K562 (cell line): ENCODE measurements at regions of chr1 and their contacts with region 1.

Region 1: DNA sequence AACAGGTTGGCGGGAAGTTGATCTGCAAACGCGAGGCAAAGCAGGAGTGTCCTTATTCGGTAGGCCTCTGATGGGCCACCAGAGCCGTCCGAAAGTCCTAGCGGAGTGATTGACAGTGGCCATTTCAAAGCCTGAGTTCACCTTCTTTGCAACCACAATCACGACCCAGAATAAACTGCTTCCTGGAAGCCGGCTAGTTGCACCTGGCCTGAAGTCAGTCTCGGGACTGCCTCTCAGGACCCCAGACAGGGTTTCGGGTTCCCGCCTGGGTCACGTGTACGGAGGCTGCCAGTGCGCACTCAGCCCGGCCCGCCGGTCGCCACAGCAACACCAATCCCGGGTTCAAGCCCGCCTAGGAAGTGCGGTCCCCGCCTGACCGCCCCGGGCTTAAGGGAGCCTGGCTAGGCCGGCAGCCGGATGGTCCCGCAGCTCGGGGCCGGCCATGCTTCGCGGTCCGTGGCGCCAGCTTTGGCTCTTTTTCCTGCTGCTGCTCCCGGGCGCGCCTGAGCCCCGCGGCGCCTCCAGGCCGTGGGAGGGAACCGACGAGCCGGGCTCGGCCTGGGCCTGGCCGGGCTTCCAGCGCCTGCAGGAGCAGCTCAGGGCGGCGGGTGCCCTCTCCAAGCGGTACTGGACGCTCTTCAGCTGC is at the start of gene TOR3A:
- DNase-seq: peak; percentile 93 to 95 (median 94)
- ATAC-seq: peak; percentile 91
- H3K4me3 ChIP-seq: peak within 1 kb of the TSS; percentile 63
- H3K27ac ChIP-seq: peak within 1 kb of the TSS; percentile 78
- H3K4me1 ChIP-seq: peaks cover 17 to 22% of the 10 kb centered on the region in 2 experiments; a peak in 4 of 5 replicates
- H3K27me3 ChIP-seq: no peaks in the 10 kb centered on the region
- CTCF ChIP-seq: no peak
- EP300 ChIP-seq: no peak
- POLR2A ChIP-seq: peak; percentile 88
- RAD21 ChIP-seq: no peak
- polyA plus RNA-seq, gene TOR3A: 7.9 to 13.0 TPM

Region 2: DNA sequence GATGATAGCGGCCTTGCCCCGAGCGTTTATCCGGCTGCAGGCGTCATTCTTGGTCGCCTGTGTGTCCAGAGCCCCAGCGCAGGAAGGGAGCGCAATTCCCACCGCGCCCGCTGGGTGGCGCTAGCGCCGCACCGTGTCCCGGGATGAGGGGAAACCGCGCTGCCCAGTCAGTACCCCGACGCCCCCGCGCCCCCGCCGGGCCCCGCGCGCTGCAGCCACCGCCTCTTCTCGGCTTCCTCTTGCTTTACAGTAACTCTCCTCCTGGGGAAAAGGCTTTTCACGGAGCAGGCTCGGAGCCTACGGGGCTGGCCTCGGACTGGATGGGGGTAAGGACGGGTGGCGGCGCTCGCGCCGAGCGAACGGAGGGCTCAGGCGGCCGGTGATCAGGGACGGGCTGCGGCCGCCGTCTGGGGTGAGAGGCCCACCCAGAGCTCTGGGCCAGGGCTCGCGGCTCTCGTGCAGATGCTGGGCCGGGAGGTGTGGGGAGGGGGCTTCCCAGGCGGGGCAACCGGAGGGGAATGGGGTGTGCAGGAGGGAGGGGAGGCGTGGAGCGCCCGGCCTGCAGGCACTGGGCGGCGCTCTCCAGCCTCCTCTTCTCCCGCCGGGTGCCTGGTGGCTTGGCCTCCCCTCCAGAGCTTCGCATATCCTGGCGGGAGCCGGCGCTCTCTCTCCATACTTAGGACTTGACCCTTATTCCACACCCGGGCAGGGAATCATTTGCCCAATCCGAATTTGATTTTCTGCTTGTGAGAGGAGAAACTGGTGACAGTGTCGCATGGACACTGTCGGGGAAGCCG is 539.1 kb before region 1 on chr1:
- CTCF ChIA-PET with region 1: no interaction called
- POLR2A ChIA-PET with region 1: no interaction called
- in situ Hi-C with region 1: no loop called
- intact Hi-C with region 1: loop called (anchors 5 kb)
- DNase-seq: peak; percentile 85 to 94 (median 91)
- ATAC-seq: peak; percentile 96
- H3K4me3 ChIP-seq: peak overlapping the region; percentile 51
- H3K27ac ChIP-seq: no peak overlapping the region
- H3K4me1 ChIP-seq: peaks cover 0 to 16% of the 10 kb centered on the region in 2 experiments; a peak in 4 of 5 replicates
- H3K27me3 ChIP-seq: peaks cover 20 to 44% of the 10 kb centered on the region in 2 experiments
- CTCF ChIP-seq: peak; percentile 91 to 94 (median 93)
- EP300 ChIP-seq: no peak
- POLR2A ChIP-seq: no peak
- RAD21 ChIP-seq: peak; percentile 83 to 86

Region 3: GRCh38 chr1:178774263-178774662 is 307.5 kb before region 1 on chr1:
- CTCF ChIA-PET with region 1: no interaction called
- POLR2A ChIA-PET with region 1: no interaction called
- in situ Hi-C with region 1: no loop called
- intact Hi-C with region 1: loop called (anchors 5 kb)
- DNase-seq: peak in 1 of 4 experiments; percentile 37
- ATAC-seq: peak; percentile 59; the same call in 1 of the 3 replicates
- H3K4me3 ChIP-seq: no peak overlapping the region
- H3K27ac ChIP-seq: no peak overlapping the region
- H3K4me1 ChIP-seq: no peaks in the 10 kb centered on the region
- H3K27me3 ChIP-seq: no peaks in the 10 kb centered on the region
- CTCF ChIP-seq: peak in 2 of 3 experiments; percentile 30 to 69; a peak in 3 of 6 replicates
- EP300 ChIP-seq: no peak
- POLR2A ChIP-seq: no peak
- RAD21 ChIP-seq: peak; percentile 78 to 81

Region 4: DNA sequence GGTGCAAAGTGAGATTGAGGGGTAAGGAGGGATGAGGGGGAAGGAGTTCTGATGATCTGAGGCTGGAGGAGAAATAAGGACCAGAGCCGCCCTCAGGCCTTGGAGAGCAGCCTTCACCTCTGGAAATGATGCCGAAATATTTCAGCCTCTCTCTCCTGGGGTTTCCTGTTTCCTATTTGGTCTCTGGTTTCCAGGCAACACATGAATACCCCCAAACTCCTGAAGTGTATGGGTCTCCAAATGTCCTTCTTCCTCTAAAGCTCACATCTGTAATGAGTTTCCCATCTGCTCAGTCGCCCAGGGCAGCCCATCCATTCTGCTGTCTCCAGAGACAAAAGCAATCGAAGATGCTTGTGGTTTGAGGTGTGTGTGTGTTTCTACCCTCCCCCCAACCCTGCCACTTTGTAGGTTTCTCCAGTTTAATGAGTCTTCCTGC is 108.1 kb before region 1 on chr1:
- CTCF ChIA-PET with region 1: no interaction called
- POLR2A ChIA-PET with region 1: no interaction called
- in situ Hi-C with region 1: no loop called
- intact Hi-C with region 1: no loop called
- DNase-seq: no peak
- ATAC-seq: no peak
- H3K4me3 ChIP-seq: no peak overlapping the region
- H3K27ac ChIP-seq: no peak overlapping the region
- H3K4me1 ChIP-seq: no peaks in the 10 kb centered on the region
- H3K27me3 ChIP-seq: peaks cover 0 to 5% of the 10 kb centered on the region in 2 experiments; a peak in 3 of 5 replicates
- CTCF ChIP-seq: no peak
- EP300 ChIP-seq: no peak
- POLR2A ChIP-seq: no peak
- RAD21 ChIP-seq: no peak

Region 5: GRCh38 chr1:179190861-179191260 is 109.1 kb after region 1 on chr1:
- CTCF ChIA-PET with region 1: interaction called, 3 read pairs
- POLR2A ChIA-PET with region 1: no interaction called
- in situ Hi-C with region 1: no loop called
- intact Hi-C with region 1: loop called (anchors 2 kb)
- DNase-seq: peak in 1 of 4 experiments; percentile 13
- ATAC-seq: no peak
- H3K4me3 ChIP-seq: no peak overlapping the region
- H3K27ac ChIP-seq: no peak overlapping the region
- H3K4me1 ChIP-seq: peaks cover 7 to 10% of the 10 kb centered on the region in 2 experiments; a peak in 2 of 5 replicates
- H3K27me3 ChIP-seq: no peaks in the 10 kb centered on the region
- CTCF ChIP-seq: no peak
- EP300 ChIP-seq: no peak
- POLR2A ChIP-seq: no peak
- RAD21 ChIP-seq: no peak

Region 6: DNA sequence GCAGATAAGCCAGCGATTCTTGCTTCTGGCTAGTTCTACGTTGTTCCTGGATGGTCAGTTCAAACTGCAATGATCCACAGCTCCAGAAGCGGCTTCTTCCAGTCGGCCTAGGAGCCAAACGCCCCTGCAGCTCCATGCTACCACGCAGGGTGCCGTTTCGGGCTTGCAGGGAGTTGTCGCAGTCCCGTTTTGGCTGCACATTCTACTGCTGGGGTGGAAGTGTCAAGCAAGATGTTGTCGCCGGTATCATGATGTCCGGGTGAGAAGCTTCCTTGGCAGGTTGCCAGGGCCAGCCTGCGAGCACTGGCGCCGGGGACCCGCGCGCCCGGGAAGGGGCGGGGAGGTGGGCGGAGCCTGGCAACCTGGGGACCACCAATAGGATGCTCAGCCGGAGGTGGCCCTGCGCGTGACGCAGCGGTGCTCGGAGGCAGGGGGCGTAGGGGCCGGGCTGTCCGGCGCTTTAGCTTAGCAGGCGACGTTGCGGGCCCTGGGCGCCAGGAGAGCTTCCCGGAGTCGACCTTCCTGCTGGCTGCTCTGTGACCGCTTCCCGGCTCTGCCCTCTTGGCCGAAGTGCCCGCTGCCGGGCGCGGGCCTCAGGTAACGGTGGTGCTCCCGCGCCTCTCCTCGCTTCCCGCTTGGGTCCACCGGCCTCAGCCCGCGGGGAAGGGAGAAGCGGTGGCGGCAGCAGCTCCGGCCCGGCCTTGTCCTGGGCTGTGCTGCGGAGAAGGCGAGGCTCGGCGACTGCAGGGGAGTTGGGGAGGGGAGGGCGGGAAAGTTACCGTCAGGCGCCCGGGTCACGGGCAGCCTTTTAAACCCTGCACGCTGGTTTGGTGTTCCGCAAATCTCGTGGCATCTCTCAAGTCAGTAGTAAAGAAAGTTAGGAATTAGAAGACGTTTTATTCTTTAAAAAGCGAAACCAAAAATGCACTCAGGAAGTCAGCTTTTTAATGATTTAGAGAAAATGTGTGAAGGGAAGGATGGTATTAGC is 211.8 kb after region 1 on chr1 and contains the start of gene SOAT1:
- CTCF ChIA-PET with region 1: no interaction called
- POLR2A ChIA-PET with region 1: no interaction called
- in situ Hi-C with region 1: no loop called
- intact Hi-C with region 1: loop called (anchors 1 kb)
- DNase-seq: peak; percentile 98 to 99 (median 98)
- ATAC-seq: peak; percentile 98
- H3K4me3 ChIP-seq: peak within 1 kb of the TSS; percentile 72
- H3K27ac ChIP-seq: peak within 1 kb of the TSS; percentile 84
- H3K4me1 ChIP-seq: peaks cover 12 to 20% of the 10 kb centered on the region in 2 experiments; a peak in 4 of 5 replicates
- H3K27me3 ChIP-seq: no peaks in the 10 kb centered on the region
- CTCF ChIP-seq: peak in 2 of 3 experiments; percentile 16 to 38; a peak in 2 of 6 replicates
- EP300 ChIP-seq: no peak
- POLR2A ChIP-seq: peak; percentile 91
- RAD21 ChIP-seq: peak in 1 of 2 experiments; percentile 27; a peak in 2 of 4 replicates
- polyA plus RNA-seq, gene SOAT1: 9.2 to 11.9 TPM

Region 7: GRCh38 chr1:179441501-179441900 is 359.7 kb after region 1 on chr1:
- CTCF ChIA-PET with region 1: no interaction called
- POLR2A ChIA-PET with region 1: no interaction called
- in situ Hi-C with region 1: no loop called
- intact Hi-C with region 1: no loop called
- DNase-seq: no peak
- ATAC-seq: no peak
- H3K4me3 ChIP-seq: no peak overlapping the region
- H3K27ac ChIP-seq: no peak overlapping the region
- H3K4me1 ChIP-seq: no peaks in the 10 kb centered on the region
- H3K27me3 ChIP-seq: peaks cover 6 to 29% of the 10 kb centered on the region in 2 experiments
- CTCF ChIP-seq: peak in 1 of 3 experiments; percentile 27; a peak in 1 of 6 replicates
- EP300 ChIP-seq: no peak
- POLR2A ChIP-seq: no peak
- RAD21 ChIP-seq: peak in 1 of 2 experiments; percentile 35; a peak in 1 of 4 replicates

Region 8: DNA sequence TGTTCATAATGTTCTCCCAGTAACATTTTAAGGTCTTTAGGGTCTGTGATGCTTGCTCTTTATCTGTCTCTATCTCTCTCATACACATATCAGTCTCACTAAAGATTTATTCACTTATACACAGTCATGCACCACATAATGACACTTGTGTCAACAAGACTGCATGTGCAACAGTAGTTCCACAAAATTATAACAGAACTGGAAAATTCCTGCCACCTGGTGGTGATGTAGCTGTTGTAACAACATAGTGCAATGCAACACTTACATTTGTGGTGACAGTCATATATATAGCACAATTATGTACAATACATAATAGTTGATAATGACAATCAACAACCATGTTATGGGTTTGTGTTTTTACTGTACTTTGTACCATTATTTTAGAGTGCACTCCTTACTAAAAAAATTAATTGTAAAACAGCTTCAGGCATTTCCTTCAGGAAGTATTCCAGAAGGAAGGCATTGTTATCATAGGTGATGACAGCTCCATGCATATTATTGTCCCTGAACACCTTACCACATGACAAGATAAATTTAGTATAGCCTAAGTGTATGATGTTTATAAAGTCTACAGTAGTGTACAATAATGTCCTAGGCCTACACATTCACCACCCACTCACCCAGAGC is 517.9 kb after region 1 on chr1:
- CTCF ChIA-PET with region 1: interaction called, 9 read pairs
- POLR2A ChIA-PET with region 1: no interaction called
- in situ Hi-C with region 1: no loop called
- intact Hi-C with region 1: loop called (anchors 5 kb)
- DNase-seq: peak; percentile 26 to 52 (median 28)
- ATAC-seq: peak; percentile 87
- H3K4me3 ChIP-seq: no peak overlapping the region
- H3K27ac ChIP-seq: no peak overlapping the region
- H3K4me1 ChIP-seq: no peaks in the 10 kb centered on the region
- H3K27me3 ChIP-seq: no peaks in the 10 kb centered on the region
- CTCF ChIP-seq: peak; percentile 44 to 61 (median 53)
- EP300 ChIP-seq: no peak
- POLR2A ChIP-seq: no peak
- RAD21 ChIP-seq: peak; percentile 23 to 71; a peak in 2 of 4 replicates